ENCODE measurements at regions of chr12 and their contacts with region 1.

Region 1: GRCh38 chr12:19643635-19644034 is 204.3 kb downstream of the AEBP2 start:
- DNase-seq: no peak
- ATAC-seq: peak in 2 of 4 donors; percentile 34 to 38
- H3K4me3 ChIP-seq: no peak overlapping the region
- H3K27ac ChIP-seq: no peak overlapping the region
- H3K4me1 ChIP-seq: peaks cover 0 to 12% (median 0%) of the 10 kb centered on the region in 12 donors
- H3K27me3 ChIP-seq: no peaks in the 10 kb centered on the region
- CTCF ChIP-seq: peak; percentile 23 to 78 (median 50)
- POLR2A ChIP-seq: no peak

Region 2: DNA sequence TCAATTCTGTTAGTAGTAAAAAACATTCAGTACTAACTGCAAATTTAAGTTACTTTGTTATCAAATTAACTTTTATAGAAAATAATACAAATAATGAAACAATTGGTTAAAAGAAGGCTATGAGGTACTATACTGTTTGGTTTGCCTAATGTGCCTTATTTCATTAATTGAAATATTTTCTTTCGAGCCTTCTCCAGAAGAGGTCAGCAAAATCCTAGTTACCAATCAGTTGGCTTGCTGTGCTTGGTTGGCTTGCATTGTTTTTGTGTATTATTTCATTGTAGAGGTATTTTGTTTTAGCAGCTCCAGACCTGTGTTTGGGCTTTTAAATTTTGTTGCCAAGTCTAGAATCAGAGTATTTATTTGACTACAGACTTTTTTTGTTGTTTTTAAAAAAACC is 135.8 kb before region 1 on chr12:
- intact Hi-C with region 1: loop called in 9 of 10 experiments (anchors 5 to 10 kb)
- DNase-seq: no peak
- ATAC-seq: peak in 2 of 4 donors; percentile 39 to 64
- H3K4me3 ChIP-seq: no peak overlapping the region
- H3K27ac ChIP-seq: no peak overlapping the region
- H3K4me1 ChIP-seq: peaks cover 0 to 29% (median 10%) of the 10 kb centered on the region in 12 donors
- H3K27me3 ChIP-seq: no peaks in the 10 kb centered on the region
- CTCF ChIP-seq: peak in 10 of 12 donors; percentile 22 to 64 (median 46)
- POLR2A ChIP-seq: no peak

Region 3: DNA sequence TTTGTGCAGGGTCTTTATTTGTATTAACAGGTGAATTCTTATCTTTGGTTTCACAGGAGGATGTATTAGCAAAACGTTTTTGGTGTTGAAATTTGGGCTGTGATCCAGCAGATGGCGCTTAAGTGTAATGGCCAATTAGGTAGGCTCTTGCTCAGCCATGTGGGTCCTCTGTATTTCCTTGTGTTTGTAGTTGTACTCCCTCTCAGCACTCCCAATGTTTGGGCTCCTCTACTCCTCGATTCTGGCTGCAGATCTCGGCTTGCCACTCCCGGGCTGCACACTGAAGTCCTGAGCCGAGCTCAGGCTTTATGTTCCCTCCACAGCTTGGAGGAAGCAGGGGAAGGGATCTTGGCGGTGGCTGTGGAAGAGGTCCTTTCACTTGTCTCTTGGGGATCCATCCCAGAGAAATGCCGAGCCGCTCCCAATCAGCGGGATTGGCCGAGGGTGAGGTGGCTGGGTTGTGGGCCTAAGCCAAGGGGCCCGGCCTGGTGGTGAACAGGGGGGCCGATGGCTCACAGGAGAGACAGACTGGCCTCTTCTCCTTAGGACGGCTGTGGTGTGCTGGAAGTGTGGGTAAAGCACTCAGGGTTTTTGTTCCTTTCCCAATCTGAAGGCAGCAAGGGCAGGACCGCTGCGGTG is 70.6 kb before region 1 on chr12:
- intact Hi-C with region 1: loop called in 1 of 10 experiments (anchors 10 kb)
- DNase-seq: no peak
- ATAC-seq: no peak
- H3K4me3 ChIP-seq: no peak overlapping the region
- H3K27ac ChIP-seq: no peak overlapping the region
- H3K4me1 ChIP-seq: peaks cover 3 to 30% (median 17%) of the 10 kb centered on the region in 12 donors
- H3K27me3 ChIP-seq: no peaks in the 10 kb centered on the region
- CTCF ChIP-seq: peak in 7 of 12 donors; percentile 8 to 43 (median 28)
- POLR2A ChIP-seq: no peak

Region 4: GRCh38 chr12:19588951-19589350 is 54.7 kb before region 1 on chr12:
- intact Hi-C with region 1: loop called in 1 of 10 experiments (anchors 10 kb)
- DNase-seq: no peak
- ATAC-seq: no peak
- H3K4me3 ChIP-seq: no peak overlapping the region
- H3K27ac ChIP-seq: no peak overlapping the region
- H3K4me1 ChIP-seq: no peaks in the 10 kb centered on the region
- H3K27me3 ChIP-seq: no peaks in the 10 kb centered on the region
- CTCF ChIP-seq: no peak
- POLR2A ChIP-seq: no peak

Region 5: DNA sequence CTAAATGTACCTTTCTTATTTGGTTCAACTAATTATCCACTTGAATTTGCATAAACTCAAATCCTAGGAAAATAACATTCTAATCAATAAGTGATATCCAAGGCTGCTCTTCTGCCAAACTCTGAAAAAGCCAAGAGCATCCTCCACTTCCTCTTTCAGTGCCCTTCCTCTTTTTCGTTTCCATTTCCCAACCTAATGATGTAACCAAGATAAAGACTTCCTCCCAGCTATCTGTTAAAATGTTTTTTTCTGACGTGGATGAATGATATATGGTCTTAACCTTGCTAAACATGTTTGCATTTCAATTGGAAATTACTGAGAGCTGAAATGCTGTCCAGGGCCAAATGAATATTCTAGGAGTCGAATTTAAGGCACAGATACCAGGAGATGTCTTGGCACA is 265.2 kb after region 1 on chr12:
- intact Hi-C with region 1: no loop called
- DNase-seq: no peak
- ATAC-seq: no peak
- H3K4me3 ChIP-seq: no peak overlapping the region
- H3K27ac ChIP-seq: peak overlapping the region in 1 of 12 donors; percentile 46
- H3K4me1 ChIP-seq: peaks cover 0 to 11% (median 0%) of the 10 kb centered on the region in 12 donors
- H3K27me3 ChIP-seq: no peaks in the 10 kb centered on the region
- CTCF ChIP-seq: no peak
- POLR2A ChIP-seq: no peak

Region 6: GRCh38 chr12:20050221-20050620 is 406.6 kb after region 1 on chr12:
- intact Hi-C with region 1: no loop called
- DNase-seq: no peak
- ATAC-seq: no peak
- H3K4me3 ChIP-seq: no peak overlapping the region
- H3K27ac ChIP-seq: no peak overlapping the region
- H3K4me1 ChIP-seq: no peaks in the 10 kb centered on the region
- H3K27me3 ChIP-seq: no peaks in the 10 kb centered on the region
- CTCF ChIP-seq: no peak
- POLR2A ChIP-seq: no peak